ENCODE measurements at regions of chr12 and their contacts with region 1.

Region 1: DNA sequence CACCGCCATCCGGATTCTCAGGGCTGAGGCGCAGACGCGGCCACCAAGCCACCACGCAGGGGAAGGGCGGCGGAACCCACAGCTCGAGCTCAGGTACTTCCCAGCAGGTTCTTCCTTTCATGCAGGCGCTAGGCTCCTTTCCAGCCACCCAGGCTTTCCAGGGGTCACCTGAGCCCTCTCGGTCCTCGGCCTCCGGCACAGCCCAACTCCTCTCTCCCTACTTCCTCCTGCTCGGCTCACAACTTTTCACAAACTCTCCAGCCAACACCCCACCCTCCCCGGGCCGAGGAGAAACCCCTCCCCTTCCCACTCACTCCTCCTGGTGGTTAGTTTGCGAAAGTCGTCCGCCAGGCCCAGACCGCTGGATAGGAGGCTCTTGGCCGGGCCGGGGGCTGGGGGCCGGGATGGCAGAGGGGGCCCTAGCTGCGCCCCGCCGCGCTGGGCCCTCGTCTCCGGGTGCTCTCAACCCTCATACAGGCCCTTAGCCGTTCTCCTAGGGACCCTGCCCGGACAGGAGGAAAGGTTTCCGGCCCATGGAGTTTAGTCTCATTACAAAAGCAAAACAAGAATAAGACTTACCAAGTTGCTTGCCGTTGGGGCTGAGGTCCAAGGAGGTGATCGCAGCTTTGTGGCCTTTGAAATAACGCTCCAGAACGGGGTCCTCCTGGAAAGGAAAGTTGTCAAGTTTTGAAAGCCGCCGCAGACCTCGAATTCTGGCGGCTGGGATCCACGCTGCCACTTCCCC is at the start of gene GALNT4:
- DNase-seq: peak; percentile 83
- H3K4me3 ChIP-seq: peak within 1 kb of the TSS; percentile 88 to 97 (median 92)
- H3K27ac ChIP-seq: peak within 1 kb of the TSS; percentile 54
- H3K4me1 ChIP-seq: peaks cover 14% of the 10 kb centered on the region
- H3K27me3 ChIP-seq: no peaks in the 10 kb centered on the region
- CTCF ChIP-seq: peak; percentile 41 to 86
- total RNA-seq, gene GALNT4: 7.9 to 12.3 TPM

Region 2: GRCh38 chr12:88580051-88580871 is 944.5 kb before region 1 on chr12 and contains the start of gene KITLG:
- CTCF ChIA-PET with region 1: no interaction called
- dilution Hi-C with region 1: no loop called
- in situ Hi-C with region 1: no loop called
- intact Hi-C with region 1: loop called (anchors 10 kb)
- DNase-seq: peak; percentile 90
- H3K4me3 ChIP-seq: peak within 1 kb of the TSS; percentile 96 to 99 (median 98)
- H3K27ac ChIP-seq: peak within 1 kb of the TSS; percentile 69
- H3K4me1 ChIP-seq: peaks cover 22% of the 10 kb centered on the region
- H3K27me3 ChIP-seq: no peaks in the 10 kb centered on the region
- CTCF ChIP-seq: peak; percentile 13 to 63
- total RNA-seq, gene KITLG: 26.2 to 45.3 TPM

Region 3: DNA sequence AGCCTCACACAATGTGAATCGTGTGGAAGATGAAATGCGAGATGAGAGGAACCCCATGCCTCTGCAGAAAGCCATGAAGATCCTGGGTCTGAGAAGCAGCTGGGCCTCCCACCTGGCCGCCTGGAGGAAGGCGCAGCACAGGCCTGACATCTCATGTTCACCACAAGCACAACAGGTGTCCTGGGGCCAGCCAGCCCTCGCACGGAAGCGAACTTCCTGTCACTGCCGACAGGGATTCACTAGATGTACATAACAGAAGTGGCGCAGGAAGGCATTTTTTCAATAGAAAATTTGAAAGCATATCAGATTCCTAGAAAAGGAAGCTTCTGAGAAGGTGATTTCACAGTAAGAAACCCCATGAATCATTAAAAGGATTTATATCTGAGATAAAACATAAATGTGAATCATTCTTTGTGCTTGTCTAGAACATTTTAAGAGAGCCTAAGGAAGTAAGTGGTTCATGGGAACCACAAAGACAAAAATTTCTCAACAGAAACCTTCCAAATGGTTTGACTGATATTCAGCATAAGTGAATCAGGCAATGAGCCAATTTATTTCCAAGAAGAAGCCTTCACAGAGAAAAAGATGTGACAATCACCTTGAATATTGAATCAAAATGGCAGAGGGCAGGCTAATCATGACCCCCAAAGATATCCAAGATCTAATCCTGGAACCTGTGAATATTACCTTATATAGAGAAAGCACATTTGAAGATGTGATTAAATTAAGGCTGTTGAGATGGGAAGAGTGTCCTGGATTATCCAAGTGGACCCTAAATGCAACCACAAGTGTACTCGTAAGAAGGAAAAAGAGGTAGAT is 484.4 kb before region 1 on chr12:
- CTCF ChIA-PET with region 1: no interaction called
- dilution Hi-C with region 1: no loop called
- in situ Hi-C with region 1: loop called in 1 of 2 experiments (anchors 10 kb)
- intact Hi-C with region 1: no loop called
- DNase-seq: peak; percentile 78
- H3K4me3 ChIP-seq: no peak overlapping the region
- H3K27ac ChIP-seq: no peak overlapping the region
- H3K4me1 ChIP-seq: no peaks in the 10 kb centered on the region
- H3K27me3 ChIP-seq: no peaks in the 10 kb centered on the region
- CTCF ChIP-seq: no peak

Region 4: GRCh38 chr12:89352492-89353187 is 172.1 kb before region 1 on chr12 and contains the start of gene DUSP6:
- CTCF ChIA-PET with region 1: no interaction called
- dilution Hi-C with region 1: no loop called
- in situ Hi-C with region 1: no loop called
- intact Hi-C with region 1: loop called (anchors 1 kb)
- DNase-seq: peak; percentile 100
- H3K4me3 ChIP-seq: peak within 1 kb of the TSS; percentile 85 to 93 (median 92)
- H3K27ac ChIP-seq: peak within 1 kb of the TSS; percentile 91
- H3K4me1 ChIP-seq: peaks cover 43% of the 10 kb centered on the region
- H3K27me3 ChIP-seq: no peaks in the 10 kb centered on the region
- CTCF ChIP-seq: no peak
- total RNA-seq, gene DUSP6: 190 to 291 TPM

Region 5: GRCh38 chr12:89470741-89471509 is 53.8 kb before region 1 on chr12:
- CTCF ChIA-PET with region 1: no interaction called
- dilution Hi-C with region 1: no loop called
- in situ Hi-C with region 1: loop called (anchors 10 kb)
- intact Hi-C with region 1: loop called (anchors 1 kb)
- DNase-seq: peak; percentile 21
- H3K4me3 ChIP-seq: no peak overlapping the region
- H3K27ac ChIP-seq: no peak overlapping the region
- H3K4me1 ChIP-seq: peaks cover 19% of the 10 kb centered on the region
- H3K27me3 ChIP-seq: no peaks in the 10 kb centered on the region
- CTCF ChIP-seq: peak; percentile 51 to 65

Measured in mammary epithelial cell (primary cell).